Activated CD8-positive, alpha-beta T cell treated with anti-CD3 and anti-CD28 coated beads for 36 hours (primary cell): ENCODE measurements at regions of chr20 and their contacts with region 1.

Region 1: DNA sequence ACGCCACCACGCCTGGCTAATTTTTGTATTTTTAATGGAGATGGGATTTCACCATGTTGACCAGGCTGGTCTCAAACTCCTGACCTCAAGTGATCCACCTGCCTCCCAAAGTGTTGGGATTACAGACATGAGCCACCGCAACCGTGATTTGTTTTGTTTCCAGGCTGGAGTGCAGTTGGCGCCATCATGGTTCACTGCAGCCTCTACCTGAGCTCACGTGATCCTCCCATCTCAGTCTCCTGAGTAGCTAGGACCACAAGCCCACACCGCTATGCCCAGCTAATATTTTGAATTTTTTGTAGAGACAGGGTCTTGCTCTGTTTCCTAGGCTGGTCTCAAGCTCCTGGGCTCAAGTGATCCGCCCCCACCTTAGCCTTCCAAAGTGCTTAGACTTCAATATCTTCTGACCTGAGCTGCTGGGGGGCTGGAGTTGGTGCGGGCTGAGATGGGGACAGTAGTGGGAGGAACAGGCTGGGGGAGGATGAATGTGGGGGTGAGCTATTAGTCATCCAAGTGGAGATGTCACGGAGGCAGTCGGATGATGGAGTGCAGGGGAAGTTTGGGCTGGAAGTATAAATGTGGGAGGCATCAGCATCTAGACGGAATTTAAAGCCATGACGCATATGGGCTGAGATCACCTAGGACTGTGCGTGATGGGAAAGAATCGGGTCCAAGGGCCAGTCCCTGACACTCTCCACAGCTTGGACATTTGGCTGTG is 23.1 kb upstream of the ZMYND8 start:
- DNase-seq: no peak
- ATAC-seq: no peak
- H3K4me3 Mint-ChIP-seq: no peak overlapping the region
- H3K27ac Mint-ChIP-seq: peak overlapping the region; percentile 18
- H3K4me1 Mint-ChIP-seq: peaks cover 27% of the 10 kb centered on the region
- H3K27me3 Mint-ChIP-seq: no peaks in the 10 kb centered on the region
- CTCF ChIP-seq: no peak

Region 2: DNA sequence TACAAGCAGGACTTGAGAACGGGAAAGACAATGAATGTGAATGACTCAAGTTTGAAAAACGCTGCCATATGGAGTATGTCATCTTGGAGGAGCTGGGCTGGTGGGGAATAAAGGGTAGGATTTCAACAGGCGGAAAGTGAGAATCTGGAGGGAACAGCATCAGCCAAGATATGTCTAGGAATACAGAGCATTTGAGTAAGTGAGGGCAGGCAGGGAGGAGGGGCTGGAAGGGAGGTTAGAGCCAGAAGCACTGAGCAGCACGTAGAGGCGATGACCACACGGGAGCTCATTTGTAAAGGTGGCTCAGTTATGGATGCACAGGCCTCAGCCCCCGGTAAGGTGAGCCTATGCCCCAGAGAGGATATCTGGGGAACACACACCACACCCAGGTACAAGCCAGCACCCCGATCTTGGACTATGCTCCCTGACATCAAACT is 138.2 kb before region 1 on chr20:
- CTCF ChIA-PET with region 1: interaction called, 25 read pairs
- POLR2A ChIA-PET with region 1: no interaction called
- intact Hi-C with region 1: no loop called
- DNase-seq: no peak
- ATAC-seq: no peak
- H3K4me3 Mint-ChIP-seq: no peak overlapping the region
- H3K27ac Mint-ChIP-seq: no peak overlapping the region
- H3K4me1 Mint-ChIP-seq: no peaks in the 10 kb centered on the region
- H3K27me3 Mint-ChIP-seq: no peaks in the 10 kb centered on the region
- CTCF ChIP-seq: no peak

Region 3: GRCh38 chr20:47296950-47297349 is 82.6 kb before region 1 on chr20:
- CTCF ChIA-PET with region 1: interaction called, 25 read pairs
- POLR2A ChIA-PET with region 1: interaction called, 3 read pairs
- intact Hi-C with region 1: no loop called
- DNase-seq: peak; percentile 32
- ATAC-seq: no peak
- H3K4me3 Mint-ChIP-seq: no peak overlapping the region
- H3K27ac Mint-ChIP-seq: peak overlapping the region; percentile 38
- H3K4me1 Mint-ChIP-seq: peaks cover 25% of the 10 kb centered on the region
- H3K27me3 Mint-ChIP-seq: no peaks in the 10 kb centered on the region
- CTCF ChIP-seq: no peak

Region 4: DNA sequence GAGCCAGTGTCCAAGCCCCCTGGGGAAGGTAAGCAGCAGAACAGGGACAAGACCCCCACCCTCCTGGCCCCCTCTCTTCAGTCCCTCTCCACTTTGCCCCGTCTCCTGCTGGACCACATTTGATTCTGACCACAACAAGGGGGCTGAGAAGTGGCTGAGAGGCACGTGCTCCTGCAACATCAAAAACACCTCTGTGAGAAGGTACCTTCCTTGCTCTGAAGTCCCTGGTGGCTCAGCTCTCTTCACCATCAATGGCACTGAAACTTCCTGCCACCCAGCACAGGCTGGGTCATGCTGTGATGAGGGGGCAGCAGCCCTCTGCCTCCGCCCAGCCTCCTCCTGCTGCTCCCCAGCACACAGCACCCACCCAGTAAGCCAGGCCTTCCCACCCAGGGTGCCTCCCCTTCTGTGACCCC is 33.5 kb before region 1 on chr20:
- CTCF ChIA-PET with region 1: interaction called, 151 read pairs
- POLR2A ChIA-PET with region 1: no interaction called
- intact Hi-C with region 1: no loop called
- DNase-seq: peak; percentile 30
- ATAC-seq: peak; percentile 69
- H3K4me3 Mint-ChIP-seq: no peak overlapping the region
- H3K27ac Mint-ChIP-seq: peak overlapping the region; percentile 68
- H3K4me1 Mint-ChIP-seq: peaks cover 8% of the 10 kb centered on the region
- H3K27me3 Mint-ChIP-seq: no peaks in the 10 kb centered on the region
- CTCF ChIP-seq: no peak

Region 5: DNA sequence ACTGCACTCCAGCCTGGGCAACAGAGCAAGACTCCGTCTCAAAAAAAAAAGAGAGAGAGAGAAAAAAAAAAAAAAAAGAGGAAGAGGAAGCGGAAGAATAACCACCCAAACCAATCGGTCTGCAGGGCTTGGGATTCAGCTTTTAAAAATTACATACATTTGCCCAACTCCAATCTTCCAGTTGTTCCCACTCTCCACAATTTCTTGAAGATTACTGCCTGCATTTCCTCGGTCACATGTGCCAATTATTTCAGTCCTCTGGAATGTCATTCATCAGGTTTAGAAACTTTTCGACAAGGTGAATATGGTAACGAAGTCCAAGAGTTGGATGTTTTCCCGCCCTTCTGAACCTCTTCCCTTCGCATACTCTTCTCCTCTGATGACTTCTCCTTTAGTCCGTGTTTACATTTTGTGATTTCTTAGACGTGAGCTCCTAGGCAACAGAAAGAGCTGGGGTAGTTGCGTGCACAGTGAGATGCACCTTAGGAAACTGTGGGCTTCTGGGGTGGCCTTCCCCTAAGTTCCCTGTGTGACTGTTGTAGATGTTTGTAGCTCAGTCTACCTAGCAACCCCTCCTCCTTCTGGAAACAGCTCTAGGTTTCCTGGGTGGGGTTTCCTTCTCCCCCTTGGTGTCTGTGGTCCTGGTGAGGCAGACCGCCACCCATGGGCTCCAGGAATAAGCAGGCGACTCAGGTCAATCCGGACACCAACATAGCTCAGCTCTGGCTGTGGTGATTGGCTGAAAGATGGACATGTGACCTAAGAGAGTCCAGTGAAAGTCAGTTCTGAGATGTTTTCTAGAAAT is 59.2 kb after region 1 on chr20:
- CTCF ChIA-PET with region 1: no interaction called
- POLR2A ChIA-PET with region 1: no interaction called
- intact Hi-C with region 1: no loop called
- DNase-seq: peak; percentile 13
- ATAC-seq: peak; percentile 39
- H3K4me3 Mint-ChIP-seq: no peak overlapping the region
- H3K27ac Mint-ChIP-seq: no peak overlapping the region
- H3K4me1 Mint-ChIP-seq: peaks cover 7% of the 10 kb centered on the region
- H3K27me3 Mint-ChIP-seq: no peaks in the 10 kb centered on the region
- CTCF ChIP-seq: no peak

Region 6: DNA sequence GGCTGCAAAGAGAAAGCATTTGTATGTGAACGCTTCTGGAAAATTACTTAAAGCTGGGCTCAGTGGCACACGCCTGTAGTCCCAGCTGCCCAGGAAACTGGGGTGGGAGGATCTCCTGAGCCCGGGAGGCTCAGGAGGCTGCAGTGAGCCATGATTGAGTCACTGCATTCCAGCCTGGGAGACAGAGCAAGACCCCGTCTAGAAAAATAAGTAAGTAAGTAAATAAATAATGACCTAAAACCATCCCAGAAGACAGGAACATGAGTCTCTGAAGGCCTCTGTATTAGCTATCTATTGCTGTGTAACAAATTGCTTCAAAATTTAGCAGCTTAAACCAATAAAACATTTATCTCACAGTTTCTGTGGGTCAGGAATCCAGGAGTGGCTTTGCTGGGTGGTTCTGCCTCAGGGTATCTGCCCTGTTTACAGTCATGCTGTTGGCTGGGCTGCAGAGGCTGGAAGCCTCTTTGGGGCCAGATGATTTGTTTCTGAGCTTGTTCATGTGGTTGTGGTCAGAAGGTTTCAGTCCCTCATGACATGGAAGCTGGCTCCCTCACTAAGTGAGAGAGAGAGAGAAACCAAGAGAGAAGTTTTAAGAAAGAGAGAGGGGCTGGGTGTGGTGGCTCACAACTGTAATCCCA is 73.7 kb after region 1 on chr20:
- CTCF ChIA-PET with region 1: interaction called, 16 read pairs
- POLR2A ChIA-PET with region 1: no interaction called
- intact Hi-C with region 1: no loop called
- DNase-seq: peak; percentile 75
- ATAC-seq: peak; percentile 82
- H3K4me3 Mint-ChIP-seq: peak overlapping the region; percentile 34
- H3K27ac Mint-ChIP-seq: peak overlapping the region; percentile 70
- H3K4me1 Mint-ChIP-seq: peaks cover 51% of the 10 kb centered on the region
- H3K27me3 Mint-ChIP-seq: no peaks in the 10 kb centered on the region
- CTCF ChIP-seq: no peak

Region 7: DNA sequence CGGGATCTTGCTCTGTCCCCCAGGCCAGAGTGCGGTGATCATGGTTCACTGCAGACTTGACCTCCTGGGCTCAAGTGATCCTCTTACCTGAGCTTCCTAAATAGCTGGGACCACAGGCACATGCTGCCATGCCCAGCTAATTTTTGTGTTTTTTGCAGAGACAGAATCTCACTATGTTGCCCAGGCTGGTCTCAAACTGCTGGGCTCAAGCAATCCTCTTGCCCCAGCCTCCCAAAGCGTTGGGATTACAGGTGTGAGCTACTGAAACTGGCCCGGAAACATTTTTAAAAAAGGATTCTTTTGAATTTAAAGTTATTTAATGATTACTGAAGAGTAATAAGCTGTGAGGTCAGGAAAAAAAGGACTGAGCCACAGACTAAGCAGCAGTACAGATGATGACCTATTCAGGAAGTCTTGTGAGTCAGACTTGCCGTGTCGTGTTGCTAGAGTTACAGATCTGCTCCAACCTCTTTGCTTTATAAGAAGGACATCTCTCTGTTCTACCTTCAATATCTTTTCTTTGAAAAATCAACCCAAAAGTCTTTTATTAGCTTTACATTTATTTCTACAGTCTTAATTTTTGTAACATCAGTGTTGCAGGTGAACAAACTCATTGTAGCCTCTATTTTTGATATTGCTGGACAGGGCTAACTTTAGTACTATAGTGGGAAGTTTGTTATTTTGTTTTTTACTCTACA is 230.8 kb after region 1 on chr20:
- CTCF ChIA-PET with region 1: interaction called, 11 read pairs
- POLR2A ChIA-PET with region 1: no interaction called
- intact Hi-C with region 1: no loop called
- DNase-seq: peak; percentile 99
- ATAC-seq: peak; percentile 88
- H3K4me3 Mint-ChIP-seq: peak overlapping the region; percentile 68
- H3K27ac Mint-ChIP-seq: peak overlapping the region; percentile 96
- H3K4me1 Mint-ChIP-seq: peaks cover 86% of the 10 kb centered on the region
- H3K27me3 Mint-ChIP-seq: no peaks in the 10 kb centered on the region
- CTCF ChIP-seq: no peak